ENCODE measurements at regions of chr7 and their contacts with region 1.

Region 1: GRCh38 chr7:111229916-111230315 is 139.0 kb downstream of the LRRN3 start:
- DNase-seq: no peak
- H3K4me3 ChIP-seq: no peak overlapping the region
- H3K27ac ChIP-seq: no peak overlapping the region
- H3K4me1 ChIP-seq: no peaks in the 10 kb centered on the region
- H3K27me3 ChIP-seq: no peaks in the 10 kb centered on the region
- CTCF ChIP-seq: no peak
- POLR2A ChIP-seq: no peak

Region 2: DNA sequence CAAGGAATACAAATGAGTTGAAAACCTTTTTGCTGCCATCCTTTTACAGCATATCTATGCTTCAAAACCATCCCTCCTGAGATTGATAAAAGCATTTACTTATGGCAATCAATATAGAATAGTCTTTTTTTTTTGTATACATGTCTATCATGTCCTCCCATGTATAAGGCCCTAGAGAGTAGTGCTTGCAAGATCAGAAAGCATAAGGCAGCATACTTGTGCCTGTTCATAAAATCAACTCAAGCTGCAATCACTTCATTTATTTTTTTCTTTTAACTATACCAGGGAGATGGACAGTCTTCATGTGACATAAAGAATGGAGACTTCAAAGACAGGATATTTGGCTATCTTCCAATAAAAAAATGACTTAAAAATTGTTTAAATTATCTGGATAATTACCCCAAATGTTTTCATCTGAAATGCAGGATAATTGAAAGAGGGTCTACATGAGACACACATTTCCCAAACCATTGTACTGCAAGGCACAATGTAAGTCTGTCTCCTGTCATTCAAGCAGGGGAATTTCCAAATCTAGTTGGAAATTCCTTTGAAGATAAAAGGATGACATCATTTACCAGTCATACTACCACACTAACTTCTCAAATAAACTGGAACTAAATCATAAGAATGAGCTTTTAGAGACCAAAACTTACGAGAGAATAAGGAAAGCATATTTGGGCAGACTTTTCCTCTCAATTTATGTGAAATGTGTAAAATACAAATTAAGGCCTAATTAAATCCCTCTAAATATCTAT is 116.5 kb before region 1 on chr7:
- intact Hi-C with region 1: loop called in 1 of 2 experiments (anchors 10 kb)
- DNase-seq: no peak
- H3K4me3 ChIP-seq: no peak overlapping the region
- H3K27ac ChIP-seq: peak overlapping the region in 3 of 5 donors; percentile 11 to 62 (median 57)
- H3K4me1 ChIP-seq: peaks cover 20 to 29% of the 10 kb centered on the region in 2 donors
- H3K27me3 ChIP-seq: no peaks in the 10 kb centered on the region
- CTCF ChIP-seq: no peak
- POLR2A ChIP-seq: no peak

Region 3: GRCh38 chr7:111380945-111381344 is 151.0 kb after region 1 on chr7:
- intact Hi-C with region 1: no loop called
- DNase-seq: no peak
- H3K4me3 ChIP-seq: no peak overlapping the region
- H3K27ac ChIP-seq: no peak overlapping the region
- H3K4me1 ChIP-seq: peaks cover 0 to 7% of the 10 kb centered on the region in 2 donors
- H3K27me3 ChIP-seq: no peaks in the 10 kb centered on the region
- CTCF ChIP-seq: no peak
- POLR2A ChIP-seq: no peak

Region 4: DNA sequence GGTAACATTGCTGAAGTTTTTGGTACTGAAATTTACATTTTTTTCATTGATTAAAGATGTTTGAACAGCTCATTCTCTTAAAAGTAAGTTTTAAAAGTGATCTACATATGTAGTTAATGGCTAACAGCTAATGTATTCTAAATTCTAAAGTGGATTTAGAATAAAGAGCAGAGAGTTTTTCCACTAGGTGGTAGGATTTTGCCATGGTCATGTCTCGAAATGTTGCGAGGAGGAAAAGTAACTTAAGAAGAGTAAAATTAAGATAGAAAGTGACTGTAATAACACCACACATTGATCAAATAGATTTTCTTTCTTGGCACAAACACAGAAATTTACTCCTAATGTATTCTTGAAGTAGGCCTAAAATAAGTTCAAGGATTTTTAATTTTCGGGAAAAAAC is 1270.7 kb after region 1 on chr7:
- intact Hi-C with region 1: no loop called
- DNase-seq: no peak
- H3K4me3 ChIP-seq: no peak overlapping the region
- H3K27ac ChIP-seq: no peak overlapping the region
- H3K4me1 ChIP-seq: peaks cover 0 to 4% of the 10 kb centered on the region in 2 donors
- H3K27me3 ChIP-seq: no peaks in the 10 kb centered on the region
- CTCF ChIP-seq: no peak
- POLR2A ChIP-seq: no peak

Measured in adrenal gland (tissue), 19 donors.